Activated naive CD4-positive, alpha-beta T cell treated with anti-CD3 and anti-CD28 coated beads for 36 hours (primary cell): ENCODE measurements at regions of chr4 and their contacts with region 1.

Region 1: GRCh38 chr4:142846729-142847596 is 862 bp upstream of the INPP4B start:
- DNase-seq: peak; percentile 90
- H3K4me3 Mint-ChIP-seq: peak overlapping the region; percentile 86
- H3K27ac Mint-ChIP-seq: peak overlapping the region; percentile 84
- H3K4me1 Mint-ChIP-seq: peaks cover 15% of the 10 kb centered on the region
- H3K27me3 Mint-ChIP-seq: no peaks in the 10 kb centered on the region

Region 2: GRCh38 chr4:141307241-141307689 is 1539.7 kb before region 1 on chr4:
- CTCF ChIA-PET with region 1: no interaction called
- intact Hi-C with region 1: loop called (anchors 2 kb)
- DNase-seq: peak; percentile 74
- H3K4me3 Mint-ChIP-seq: no peak overlapping the region
- H3K27ac Mint-ChIP-seq: no peak overlapping the region
- H3K4me1 Mint-ChIP-seq: peaks cover 2% of the 10 kb centered on the region
- H3K27me3 Mint-ChIP-seq: peaks cover 6% of the 10 kb centered on the region

Region 3: DNA sequence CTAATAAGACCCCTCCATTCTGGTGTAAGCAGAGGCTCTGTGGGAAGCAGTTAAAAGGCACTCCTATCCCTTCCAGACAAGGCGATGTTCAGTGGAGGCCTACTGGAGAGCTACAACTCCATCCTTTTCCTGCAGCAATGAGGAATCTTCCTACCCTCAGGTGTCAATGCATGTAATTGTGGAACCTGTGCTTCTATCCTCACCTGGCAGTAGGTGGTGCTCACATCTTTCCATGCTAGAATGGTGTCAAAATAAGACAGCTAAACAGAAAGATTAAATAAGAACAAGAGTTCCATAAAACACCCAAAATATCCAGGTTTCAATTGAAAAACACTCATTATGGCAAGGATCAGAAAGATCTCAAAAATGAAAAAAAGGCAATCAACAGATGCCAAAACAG is 986.0 kb before region 1 on chr4:
- CTCF ChIA-PET with region 1: no interaction called
- intact Hi-C with region 1: loop called (anchors 2 kb)
- DNase-seq: peak; percentile 12
- H3K4me3 Mint-ChIP-seq: no peak overlapping the region
- H3K27ac Mint-ChIP-seq: no peak overlapping the region
- H3K4me1 Mint-ChIP-seq: no peaks in the 10 kb centered on the region
- H3K27me3 Mint-ChIP-seq: peaks cover 2% of the 10 kb centered on the region

Region 4: GRCh38 chr4:141912831-141913230 is 934.1 kb before region 1 on chr4:
- CTCF ChIA-PET with region 1: no interaction called
- intact Hi-C with region 1: no loop called
- DNase-seq: no peak
- H3K4me3 Mint-ChIP-seq: no peak overlapping the region
- H3K27ac Mint-ChIP-seq: no peak overlapping the region
- H3K4me1 Mint-ChIP-seq: no peaks in the 10 kb centered on the region
- H3K27me3 Mint-ChIP-seq: peaks cover 11% of the 10 kb centered on the region

Region 5: DNA sequence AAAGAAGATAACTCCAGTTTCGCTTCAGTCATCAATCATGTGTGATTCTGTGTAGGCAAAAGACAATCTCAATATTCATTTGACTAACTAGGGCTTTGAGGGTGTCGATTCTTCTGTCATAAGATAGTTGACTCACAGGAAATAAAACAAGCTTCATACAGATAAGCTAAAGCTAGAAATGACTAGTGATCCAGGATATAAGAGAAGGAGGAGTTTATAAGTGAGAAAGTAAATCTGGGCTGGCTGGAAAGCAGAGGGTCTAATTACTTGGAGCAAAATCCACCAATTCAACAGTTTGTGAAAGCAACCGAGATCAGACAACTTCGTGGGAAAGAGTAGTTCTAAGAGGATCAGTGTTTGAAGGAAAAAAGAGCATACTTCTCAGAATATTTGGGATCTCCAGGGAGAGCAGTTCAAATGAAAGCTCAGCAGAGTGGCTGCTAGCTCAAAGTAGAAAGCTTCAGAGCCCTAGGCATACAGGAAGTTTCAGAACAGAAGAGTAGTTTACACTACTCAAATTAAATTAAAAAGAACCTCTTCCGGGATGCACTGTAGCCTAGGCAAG is 430.2 kb before region 1 on chr4:
- CTCF ChIA-PET with region 1: no interaction called
- intact Hi-C with region 1: loop called (anchors 2 kb)
- DNase-seq: peak; percentile 36
- H3K4me3 Mint-ChIP-seq: peak overlapping the region; percentile 62
- H3K27ac Mint-ChIP-seq: peak overlapping the region; percentile 95
- H3K4me1 Mint-ChIP-seq: peaks cover 66% of the 10 kb centered on the region
- H3K27me3 Mint-ChIP-seq: no peaks in the 10 kb centered on the region

Region 6: DNA sequence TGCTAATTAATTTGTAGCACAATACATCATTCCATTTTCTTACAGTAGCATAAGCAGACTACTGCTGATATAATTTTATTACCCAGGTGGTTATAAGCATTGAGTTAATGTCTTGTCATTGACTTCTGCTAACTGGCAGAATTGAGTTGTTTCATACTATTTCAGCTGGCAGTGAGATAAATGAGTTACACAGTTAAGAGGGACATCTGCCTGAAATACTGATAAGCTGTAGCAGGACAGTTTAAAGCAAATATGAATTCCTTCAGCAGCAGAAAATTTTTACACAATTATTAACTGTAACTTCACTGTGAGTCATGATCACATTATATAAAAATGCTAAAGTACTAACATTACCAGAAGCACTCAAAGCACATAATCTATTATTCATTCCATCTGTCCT is 327.6 kb before region 1 on chr4:
- CTCF ChIA-PET with region 1: no interaction called
- intact Hi-C with region 1: no loop called
- DNase-seq: no peak
- H3K4me3 Mint-ChIP-seq: no peak overlapping the region
- H3K27ac Mint-ChIP-seq: no peak overlapping the region
- H3K4me1 Mint-ChIP-seq: peaks cover 24% of the 10 kb centered on the region
- H3K27me3 Mint-ChIP-seq: no peaks in the 10 kb centered on the region

Region 7: DNA sequence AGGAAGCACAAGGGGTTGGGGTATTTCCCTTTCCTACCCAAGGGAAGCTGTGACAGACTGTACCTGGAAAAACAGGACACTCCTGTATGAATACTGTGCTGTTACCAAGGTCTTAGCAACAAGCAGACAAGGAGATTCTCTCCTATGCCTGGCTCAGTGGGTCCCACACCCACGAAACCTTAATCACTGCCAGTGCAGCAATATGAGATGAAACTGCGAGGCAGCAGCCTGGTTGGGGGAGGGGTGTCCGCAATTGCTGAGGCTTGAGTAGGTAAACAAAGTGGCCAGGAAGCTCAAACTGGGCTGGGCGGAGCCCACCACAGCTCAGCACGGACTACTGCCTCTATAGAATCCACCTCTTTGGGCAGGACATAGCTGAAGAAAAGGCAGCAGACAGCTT is 198.6 kb before region 1 on chr4:
- CTCF ChIA-PET with region 1: no interaction called
- intact Hi-C with region 1: no loop called
- DNase-seq: no peak
- H3K4me3 Mint-ChIP-seq: no peak overlapping the region
- H3K27ac Mint-ChIP-seq: no peak overlapping the region
- H3K4me1 Mint-ChIP-seq: peaks cover 18% of the 10 kb centered on the region
- H3K27me3 Mint-ChIP-seq: no peaks in the 10 kb centered on the region

Region 8: DNA sequence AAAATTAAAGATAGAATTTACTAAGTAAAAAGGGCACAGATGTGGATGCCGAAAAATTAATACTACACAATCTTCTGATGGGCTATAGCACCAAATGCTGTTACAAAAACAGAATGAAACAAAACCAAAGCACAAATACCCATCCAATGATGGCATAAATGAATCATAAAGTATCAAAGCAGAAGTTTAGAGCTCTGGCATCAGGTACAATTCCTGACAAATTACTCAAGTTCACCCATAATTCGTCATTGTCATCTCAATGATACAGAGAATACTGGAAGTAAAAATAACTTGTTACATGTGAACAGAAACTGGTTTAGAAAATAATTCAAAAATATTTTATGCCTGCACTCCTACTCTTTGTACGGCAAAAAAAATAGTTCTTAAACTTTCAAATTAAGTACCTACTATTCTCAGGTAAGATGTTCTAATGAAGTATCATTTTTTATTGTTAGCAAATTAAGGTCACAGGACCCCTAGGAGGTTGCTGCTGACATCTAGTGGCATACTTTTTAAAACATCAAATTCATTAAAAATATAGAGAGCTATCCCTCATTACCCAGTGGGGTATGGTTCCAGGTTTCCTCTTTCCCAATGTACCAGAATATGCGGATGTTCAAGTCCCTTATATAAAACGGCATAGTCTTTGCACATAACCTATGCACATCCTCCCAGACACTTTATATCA is 127.0 kb before region 1 on chr4:
- CTCF ChIA-PET with region 1: interaction called, 11 read pairs
- intact Hi-C with region 1: loop called (anchors 1 kb)
- DNase-seq: no peak
- H3K4me3 Mint-ChIP-seq: no peak overlapping the region
- H3K27ac Mint-ChIP-seq: peak overlapping the region; percentile 84
- H3K4me1 Mint-ChIP-seq: peaks cover 42% of the 10 kb centered on the region
- H3K27me3 Mint-ChIP-seq: no peaks in the 10 kb centered on the region

Region 9: DNA sequence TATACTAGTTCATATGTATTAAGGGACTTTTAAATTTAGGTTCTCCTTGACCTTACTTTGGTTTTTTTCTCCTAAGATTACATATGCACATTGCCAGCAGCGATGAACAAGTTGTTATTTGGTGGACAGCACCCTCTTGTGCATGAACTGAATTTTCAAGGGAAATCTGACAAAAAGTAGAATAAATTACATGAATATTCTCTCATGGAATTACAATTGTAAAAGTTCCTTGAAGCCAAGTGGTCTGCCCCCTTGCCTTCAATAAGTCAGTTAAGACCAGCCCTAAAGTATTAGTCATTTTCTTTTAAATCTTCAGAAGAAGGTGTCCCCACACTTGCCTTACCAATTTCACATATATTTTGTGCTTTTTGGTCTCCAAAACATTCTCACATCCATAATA is 635.9 kb after region 1 on chr4:
- CTCF ChIA-PET with region 1: no interaction called
- intact Hi-C with region 1: loop called (anchors 2 kb)
- DNase-seq: peak; percentile 28
- H3K4me3 Mint-ChIP-seq: no peak overlapping the region
- H3K27ac Mint-ChIP-seq: no peak overlapping the region
- H3K4me1 Mint-ChIP-seq: no peaks in the 10 kb centered on the region
- H3K27me3 Mint-ChIP-seq: peaks cover 4% of the 10 kb centered on the region